HEK293 (cell line): ENCODE measurements at regions of chr3 and their contacts with region 1.

Region 1: DNA sequence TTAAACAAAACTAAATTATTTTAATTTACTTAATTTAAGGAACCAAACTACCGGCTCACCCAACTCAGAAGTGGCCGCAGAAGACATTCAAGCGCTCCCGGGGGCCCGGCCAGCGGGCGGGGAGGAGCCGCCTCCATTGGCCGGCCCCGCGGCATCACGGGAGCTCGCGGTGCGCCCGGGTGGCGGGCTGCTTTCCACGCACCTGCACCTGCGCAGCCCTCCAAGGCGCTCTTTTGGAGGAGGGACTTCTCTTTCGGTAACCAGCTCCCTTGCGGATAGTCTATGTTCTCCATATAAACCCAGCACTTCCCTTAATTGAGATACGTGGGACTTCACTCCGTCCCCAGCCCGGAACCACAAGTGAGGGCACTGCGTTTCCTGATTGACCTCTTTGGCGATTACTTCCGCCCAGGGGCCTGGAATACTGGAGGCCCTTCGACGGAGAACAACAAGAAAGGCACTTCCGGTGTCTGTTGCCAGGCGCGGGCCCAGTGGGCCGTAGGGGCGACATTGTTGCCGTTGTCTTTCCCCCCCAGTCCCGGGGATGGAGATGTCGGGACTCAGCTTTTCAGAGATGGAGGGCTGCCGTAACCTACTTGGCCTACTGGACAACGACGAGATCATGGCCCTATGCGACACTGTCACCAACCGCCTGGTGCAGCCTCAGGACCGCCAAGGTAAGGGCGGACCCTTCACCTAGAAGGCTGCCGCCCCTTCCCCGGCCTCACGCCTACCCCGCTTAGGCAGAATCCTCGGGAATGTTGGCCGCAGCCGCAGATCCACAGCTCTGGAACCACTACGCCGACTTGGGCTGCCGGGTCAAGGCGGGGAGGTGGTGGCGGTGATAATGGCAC is at the start of gene C3orf38:
- H3K4me3 ChIP-seq: peak within 1 kb of the TSS; percentile 90
- H3K27ac ChIP-seq: peak within 1 kb of the TSS; percentile 79
- H3K4me1 ChIP-seq: no peaks in the 10 kb centered on the region
- CTCF ChIP-seq: no peak

Region 2: DNA sequence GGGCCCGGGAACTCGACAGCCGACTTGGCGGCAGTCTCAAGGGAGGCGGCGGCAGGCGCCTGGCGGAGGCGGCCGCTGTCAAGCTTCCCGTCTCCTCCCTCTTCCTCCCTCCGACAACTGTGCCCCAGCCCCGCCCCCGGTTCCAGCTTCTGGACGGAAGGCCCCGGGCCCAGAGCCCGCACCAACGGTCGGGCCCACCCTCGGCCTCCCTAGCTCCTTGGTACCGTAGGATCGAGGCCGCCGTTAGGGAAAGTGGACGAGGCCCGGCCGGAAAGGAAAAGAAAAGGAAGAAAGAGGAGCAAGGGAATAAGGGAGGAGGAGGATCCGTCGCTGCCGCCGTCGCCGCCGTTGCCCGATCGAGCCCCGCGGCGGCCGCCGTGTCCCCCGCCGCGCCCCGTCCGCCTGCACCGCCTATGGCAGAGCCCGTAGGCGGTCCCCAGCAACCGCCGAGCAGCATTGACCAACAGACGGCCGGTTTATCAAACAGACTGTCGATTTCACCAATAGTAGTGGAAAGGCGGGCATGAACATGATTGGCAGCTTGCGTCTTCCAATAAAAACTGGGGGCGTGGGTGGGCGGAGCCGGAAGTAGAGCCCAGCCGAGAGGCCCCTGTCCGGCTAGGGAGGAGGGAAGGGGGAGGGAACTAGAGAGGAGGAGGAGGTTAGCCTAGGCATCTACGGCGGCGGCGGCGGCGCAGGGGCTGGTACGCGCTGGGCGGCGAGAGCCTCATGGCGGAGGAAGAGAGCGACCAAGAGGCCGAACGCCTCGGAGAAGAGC is 91.0 kb before region 1 on chr3 and contains the starts of genes CGGBP1 and ZNF654:
- CTCF ChIA-PET with region 1: no interaction called
- POLR2A ChIA-PET with region 1: interaction called, 16 read pairs
- H3K4me3 ChIP-seq: peak within 1 kb of the TSS; percentile 98
- H3K27ac ChIP-seq: peak within 1 kb of the TSS; percentile 94
- H3K4me1 ChIP-seq: no peaks in the 10 kb centered on the region
- CTCF ChIP-seq: no peak

Region 3: DNA sequence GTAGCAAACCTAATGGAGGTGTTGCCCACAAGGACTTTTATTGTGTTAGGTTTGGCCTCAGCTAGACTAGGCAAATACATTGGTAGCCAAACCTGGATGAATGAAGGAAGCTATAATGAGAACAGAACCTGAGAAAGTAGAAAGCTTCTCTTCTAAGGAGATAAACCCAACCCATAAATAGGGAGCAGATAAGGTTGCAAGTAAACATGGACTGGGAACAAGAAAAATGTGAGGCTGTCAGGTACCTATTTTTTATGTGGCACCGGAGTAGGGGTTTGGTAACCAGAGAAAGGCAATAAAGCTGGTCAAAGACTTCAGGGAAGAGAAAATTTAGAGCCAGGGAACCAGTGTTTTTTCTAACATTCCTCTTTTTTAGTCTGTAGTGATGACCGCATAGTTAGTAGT is 65.6 kb before region 1 on chr3:
- CTCF ChIA-PET with region 1: no interaction called
- POLR2A ChIA-PET with region 1: no interaction called
- H3K4me3 ChIP-seq: no peak overlapping the region
- H3K27ac ChIP-seq: no peak overlapping the region
- H3K4me1 ChIP-seq: no peaks in the 10 kb centered on the region
- CTCF ChIP-seq: no peak

Region 4: DNA sequence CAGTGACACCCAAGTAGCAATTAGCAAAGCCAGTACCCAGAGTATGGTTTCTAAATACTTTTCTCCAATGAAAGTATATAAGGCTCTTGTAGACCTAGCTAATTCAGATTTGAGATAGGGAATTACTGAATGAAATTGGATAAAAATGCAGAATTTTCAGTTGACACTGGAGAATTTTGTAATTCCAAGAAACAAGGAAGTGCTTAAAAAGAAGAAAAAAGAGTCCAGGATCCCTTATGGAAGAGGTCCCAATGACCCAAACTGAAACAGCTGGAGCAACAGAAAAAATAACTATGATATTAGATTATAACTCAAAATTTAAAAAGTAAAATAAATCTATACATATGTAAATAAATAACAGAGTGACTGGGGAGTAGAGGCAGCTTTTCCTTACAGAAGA is 335.3 kb after region 1 on chr3:
- CTCF ChIA-PET with region 1: no interaction called
- POLR2A ChIA-PET with region 1: no interaction called
- H3K4me3 ChIP-seq: no peak overlapping the region
- H3K27ac ChIP-seq: no peak overlapping the region
- H3K4me1 ChIP-seq: no peaks in the 10 kb centered on the region
- CTCF ChIP-seq: no peak